ENCODE measurements at regions of chr20 and their contacts with region 1.

Region 1: GRCh38 chr20:19598117-19598850 is 159.8 kb upstream of the RIN2 start:
- DNase-seq: no peak
- H3K4me3 ChIP-seq: no peak overlapping the region
- H3K27ac ChIP-seq: no peak overlapping the region
- H3K4me1 ChIP-seq: no peaks in the 10 kb centered on the region
- H3K27me3 ChIP-seq: no peaks in the 10 kb centered on the region; the same call in 1 of the 2 replicates
- CTCF ChIP-seq: no peak
- EP300 ChIP-seq: no peak
- RAD21 ChIP-seq: no peak

Region 2: DNA sequence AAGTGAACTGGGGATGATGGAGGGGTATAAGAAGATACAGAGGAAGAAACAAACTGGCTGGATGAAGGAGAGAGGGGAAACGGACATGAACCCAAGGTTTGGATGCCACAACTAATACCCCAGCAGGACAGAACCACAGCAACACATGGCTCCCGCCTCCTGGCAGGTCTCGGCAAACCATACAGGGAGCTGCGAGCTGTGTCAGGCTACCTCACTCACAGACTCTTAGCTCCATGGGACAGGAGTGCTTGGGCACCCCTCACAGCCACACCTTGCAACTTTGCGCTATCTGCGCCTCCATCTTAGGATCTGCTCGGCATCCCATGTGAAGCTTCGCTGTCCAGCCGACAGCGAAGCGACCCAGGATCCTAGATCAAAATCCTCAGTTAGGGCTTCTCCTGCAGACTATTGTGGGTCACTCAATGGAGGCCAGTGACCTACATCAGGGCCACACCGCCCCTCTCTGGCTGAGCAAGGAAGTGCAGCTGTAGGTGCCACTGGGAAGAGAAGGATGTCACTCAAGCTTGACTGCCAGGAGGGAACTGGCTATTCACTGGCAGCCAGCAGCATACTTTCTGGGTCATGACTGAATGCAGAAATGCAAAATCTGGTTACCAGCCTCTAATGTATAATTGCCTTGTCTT is 14.6 kb before region 1 on chr20:
- CTCF ChIA-PET with region 1: interaction called, 12 read pairs
- POLR2A ChIA-PET with region 1: no interaction called
- DNase-seq: peak; percentile 67
- H3K4me3 ChIP-seq: no peak overlapping the region; a peak in 1 of 4 replicates
- H3K27ac ChIP-seq: no peak overlapping the region
- H3K4me1 ChIP-seq: no peaks in the 10 kb centered on the region; a peak in 1 of 4 replicates
- H3K27me3 ChIP-seq: peaks cover 40% of the 10 kb centered on the region; the same call in 1 of the 2 replicates
- CTCF ChIP-seq: peak; percentile 75
- EP300 ChIP-seq: no peak
- RAD21 ChIP-seq: peak; percentile 68

Region 3: DNA sequence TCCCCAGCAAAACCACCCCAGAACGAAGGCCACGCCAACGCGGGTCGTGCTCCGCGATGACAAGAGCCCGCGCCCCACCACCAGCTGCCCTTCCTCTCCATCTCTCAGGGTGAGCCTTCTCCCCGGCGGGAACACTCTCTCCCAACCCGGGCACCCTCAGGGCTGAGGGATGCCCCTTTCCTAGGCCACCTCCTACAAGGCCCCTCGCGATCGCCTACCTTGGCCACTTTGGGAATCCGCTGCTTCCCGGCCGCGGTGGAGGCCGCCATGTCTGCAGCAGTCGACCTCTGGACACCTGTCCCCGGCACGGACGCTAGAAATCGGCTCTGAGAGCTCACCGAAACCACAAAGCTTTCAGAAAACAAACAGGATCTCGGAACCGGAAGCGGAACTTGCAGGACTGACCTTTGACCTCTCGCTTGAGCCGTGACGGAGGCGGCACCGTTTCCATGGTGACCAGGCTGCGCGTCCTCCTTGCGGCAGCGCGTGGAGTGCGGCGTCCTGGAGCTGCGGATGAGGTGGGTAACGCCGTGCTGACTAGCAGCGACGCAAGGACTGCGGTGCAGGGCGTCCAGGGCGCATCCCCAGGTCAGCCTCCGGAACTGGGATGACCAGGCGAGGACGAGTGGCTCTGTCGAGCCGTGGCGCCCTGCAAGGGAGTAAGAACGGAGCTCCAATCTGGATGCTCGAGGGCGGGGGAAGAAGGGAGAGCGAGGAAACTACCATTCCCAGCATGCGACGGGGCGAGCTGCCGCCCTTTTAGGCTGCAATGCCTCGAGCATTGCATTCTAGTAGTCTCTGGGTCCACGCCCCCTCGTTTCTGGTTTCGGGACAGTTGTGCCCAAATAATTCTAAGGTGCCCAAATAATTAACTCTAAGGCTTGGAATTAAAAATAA is 454.0 kb after region 1 on chr20 and contains the starts of genes CFAP61 and CRNKL1:
- CTCF ChIA-PET with region 1: no interaction called
- POLR2A ChIA-PET with region 1: no interaction called
- DNase-seq: peak; percentile 93
- H3K4me3 ChIP-seq: peak within 1 kb of the TSS; percentile 90 to 100
- H3K27ac ChIP-seq: peak within 1 kb of the TSS; percentile 84 to 88
- H3K4me1 ChIP-seq: peaks cover 3% of the 10 kb centered on the region in 2 experiments; a peak in 2 of 4 replicates
- H3K27me3 ChIP-seq: no peaks in the 10 kb centered on the region
- CTCF ChIP-seq: no peak
- EP300 ChIP-seq: no peak
- RAD21 ChIP-seq: no peak
- polyA plus RNA-seq, gene CFAP61: 0.26 and 0.62 TPM in 2 replicates
- polyA plus RNA-seq, gene CRNKL1: 7.6 and 8.9 TPM in 2 replicates